CD14-positive monocyte (primary cell): ENCODE measurements at regions of chr22 and their contacts with region 1.

Region 1: DNA sequence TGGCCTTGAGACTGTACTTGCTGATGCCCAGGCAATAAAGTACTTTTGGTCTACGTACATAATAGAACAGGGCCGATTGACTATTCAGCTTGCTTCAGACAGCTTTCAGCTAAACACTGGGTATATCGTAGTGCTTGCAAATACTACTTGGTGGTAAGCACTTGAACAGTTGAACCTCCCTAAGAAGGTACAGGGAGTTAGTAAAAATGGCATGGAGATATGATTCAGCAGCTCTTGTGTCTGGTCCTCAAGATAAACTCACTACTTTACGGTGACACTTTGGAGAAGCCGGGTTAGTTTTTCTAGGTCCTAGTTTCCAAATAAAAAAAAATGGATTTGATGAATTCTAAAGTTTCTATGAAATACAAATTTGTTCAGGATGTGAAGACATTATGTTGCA is 7.3 kb downstream of the CCDC117 start:
- DNase-seq: no peak
- H3K4me3 ChIP-seq: no peak overlapping the region
- H3K4me3 Mint-ChIP-seq: no peak overlapping the region
- H3K27ac ChIP-seq: no peak overlapping the region
- H3K27ac Mint-ChIP-seq: no peak overlapping the region
- H3K4me1 ChIP-seq: peaks cover 0 to under 1% of the 10 kb centered on the region in 2 donors
- H3K4me1 Mint-ChIP-seq: peaks cover under 1% of the 10 kb centered on the region
- H3K27me3 ChIP-seq: no peaks in the 10 kb centered on the region
- H3K27me3 Mint-ChIP-seq: peaks cover 0 to 3% (median 0%) of the 10 kb centered on the region in 3 donors
- CTCF ChIP-seq: no peak

Region 2: DNA sequence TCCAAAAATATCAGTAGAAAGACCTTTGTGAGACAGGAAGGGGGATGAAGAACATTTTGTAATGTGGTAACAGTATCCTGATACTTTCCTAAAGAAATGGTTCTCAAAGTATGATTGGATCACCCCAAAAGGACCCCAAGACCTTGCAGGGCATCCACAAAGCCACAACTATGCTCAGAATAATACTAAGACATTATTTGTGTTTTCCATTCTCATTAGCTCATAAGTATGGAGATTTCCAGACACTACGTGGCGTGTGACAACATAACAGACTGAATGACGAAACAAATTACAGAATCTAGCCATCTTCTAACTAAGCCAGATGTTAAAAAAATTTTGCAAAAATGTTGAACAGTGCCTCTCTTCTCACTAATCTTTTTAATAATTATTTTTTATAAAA is 63.1 kb before region 1 on chr22:
- intact Hi-C with region 1: no loop called
- DNase-seq: no peak
- H3K4me3 ChIP-seq: no peak overlapping the region
- H3K4me3 Mint-ChIP-seq: no peak overlapping the region
- H3K27ac ChIP-seq: no peak overlapping the region
- H3K27ac Mint-ChIP-seq: no peak overlapping the region
- H3K4me1 ChIP-seq: peaks cover 0 to 3% of the 10 kb centered on the region in 2 donors
- H3K4me1 Mint-ChIP-seq: peaks cover 6% of the 10 kb centered on the region
- H3K27me3 ChIP-seq: no peaks in the 10 kb centered on the region
- H3K27me3 Mint-ChIP-seq: peaks cover 0 to 1% (median 0%) of the 10 kb centered on the region in 3 donors
- CTCF ChIP-seq: no peak

Region 3: GRCh38 chr22:28810821-28811491 is 31.1 kb after region 1 on chr22:
- intact Hi-C with region 1: loop called in 1 of 2 experiments (anchors 5 kb)
- DNase-seq: peak in 2 of 3 donors; percentile 35 to 52
- H3K4me3 ChIP-seq: peak overlapping the region; percentile 15 to 72 (median 43)
- H3K4me3 Mint-ChIP-seq: peak overlapping the region; percentile 70 to 85
- H3K27ac ChIP-seq: peak overlapping the region; percentile 60 to 83
- H3K27ac Mint-ChIP-seq: peak overlapping the region; percentile 78 to 96 (median 91)
- H3K4me1 ChIP-seq: peaks cover 80 to 83% of the 10 kb centered on the region in 2 donors
- H3K4me1 Mint-ChIP-seq: peaks cover 81% of the 10 kb centered on the region
- H3K27me3 ChIP-seq: no peaks in the 10 kb centered on the region
- H3K27me3 Mint-ChIP-seq: no peaks in the 10 kb centered on the region
- CTCF ChIP-seq: no peak

Region 4: DNA sequence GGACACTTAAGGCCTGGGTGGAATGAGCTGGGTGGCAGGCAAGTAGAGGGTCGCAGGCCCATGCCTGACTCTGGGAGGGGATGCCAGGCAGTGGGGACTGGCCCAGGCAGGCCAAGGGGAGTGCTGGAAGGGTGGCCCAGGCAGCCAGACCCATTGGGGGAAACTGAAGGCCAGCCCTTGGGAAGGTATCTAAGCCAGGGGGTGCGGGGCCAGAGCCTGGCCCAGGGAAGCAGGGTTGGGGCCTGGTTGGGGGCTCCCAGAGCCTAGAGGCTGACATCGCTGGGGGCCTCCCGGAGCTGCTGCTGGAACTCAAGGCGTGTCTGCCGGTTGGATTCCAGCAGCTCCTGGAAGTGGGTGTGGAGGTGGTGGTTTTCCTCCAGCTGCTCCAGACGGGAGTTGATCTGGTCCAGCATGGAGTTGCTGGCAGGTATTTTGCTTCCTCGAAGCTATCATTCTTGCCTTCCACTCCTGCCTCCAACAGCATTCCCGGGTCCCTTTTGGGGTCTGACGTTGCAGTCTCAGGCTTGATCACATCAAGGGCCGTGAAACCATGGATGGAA is 55.9 kb after region 1 on chr22:
- intact Hi-C with region 1: no loop called
- DNase-seq: no peak
- H3K4me3 ChIP-seq: no peak overlapping the region
- H3K4me3 Mint-ChIP-seq: no peak overlapping the region
- H3K27ac ChIP-seq: no peak overlapping the region
- H3K27ac Mint-ChIP-seq: no peak overlapping the region
- H3K4me1 ChIP-seq: no peaks in the 10 kb centered on the region
- H3K4me1 Mint-ChIP-seq: peaks cover 15% of the 10 kb centered on the region
- H3K27me3 ChIP-seq: no peaks in the 10 kb centered on the region
- H3K27me3 Mint-ChIP-seq: peaks cover 0 to 3% (median 2%) of the 10 kb centered on the region in 3 donors
- CTCF ChIP-seq: no peak